Activated CD4-positive, alpha-beta memory T cell treated with anti-CD3 and anti-CD28 coated beads for 36 hours (primary cell): ENCODE measurements at regions of chr17 and their contacts with region 1.

Region 1: GRCh38 chr17:29369831-29370735 is 20.1 kb upstream of the TAOK1 start:
- DNase-seq: peak; percentile 63
- H3K4me3 Mint-ChIP-seq: no peak overlapping the region
- H3K27ac Mint-ChIP-seq: no peak overlapping the region
- H3K4me1 Mint-ChIP-seq: no peaks in the 10 kb centered on the region
- H3K27me3 Mint-ChIP-seq: no peaks in the 10 kb centered on the region

Region 2: GRCh38 chr17:29384900-29385299 is 14.8 kb after region 1 on chr17:
- CTCF ChIA-PET with region 1: interaction called, 43 read pairs
- POLR2A ChIA-PET with region 1: no interaction called
- intact Hi-C with region 1: no loop called
- DNase-seq: no peak
- H3K4me3 Mint-ChIP-seq: no peak overlapping the region
- H3K27ac Mint-ChIP-seq: no peak overlapping the region
- H3K4me1 Mint-ChIP-seq: peaks cover 3% of the 10 kb centered on the region
- H3K27me3 Mint-ChIP-seq: no peaks in the 10 kb centered on the region

Region 3: GRCh38 chr17:29433541-29433940 is 63.5 kb after region 1 on chr17:
- CTCF ChIA-PET with region 1: interaction called, 12 read pairs
- POLR2A ChIA-PET with region 1: no interaction called
- intact Hi-C with region 1: no loop called
- DNase-seq: no peak
- H3K4me3 Mint-ChIP-seq: no peak overlapping the region
- H3K27ac Mint-ChIP-seq: no peak overlapping the region
- H3K4me1 Mint-ChIP-seq: peaks cover 10% of the 10 kb centered on the region
- H3K27me3 Mint-ChIP-seq: no peaks in the 10 kb centered on the region

Region 4: DNA sequence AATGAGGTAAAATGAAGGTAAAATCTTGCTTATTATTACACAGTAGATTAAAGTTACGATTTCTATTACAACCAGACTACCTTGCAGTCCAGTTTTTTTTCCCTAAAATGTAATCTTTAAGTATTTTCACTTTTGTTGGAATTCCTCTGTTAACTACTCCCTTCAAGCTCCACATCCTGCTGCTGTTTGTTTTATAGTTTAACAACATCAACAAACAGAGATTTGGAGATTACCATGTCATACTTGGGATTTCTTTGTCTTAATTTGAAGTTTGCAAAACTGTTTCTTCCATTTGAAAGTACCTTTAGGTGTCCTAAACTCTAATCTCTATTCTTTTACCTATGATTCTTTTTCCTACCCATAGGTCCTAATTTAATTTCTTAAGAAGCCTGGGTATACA is 113.4 kb after region 1 on chr17:
- CTCF ChIA-PET with region 1: interaction called, 11 read pairs
- POLR2A ChIA-PET with region 1: no interaction called
- intact Hi-C with region 1: no loop called
- DNase-seq: no peak
- H3K4me3 Mint-ChIP-seq: no peak overlapping the region
- H3K27ac Mint-ChIP-seq: no peak overlapping the region
- H3K4me1 Mint-ChIP-seq: no peaks in the 10 kb centered on the region
- H3K27me3 Mint-ChIP-seq: no peaks in the 10 kb centered on the region

Region 5: GRCh38 chr17:29504711-29505110 is 134.6 kb after region 1 on chr17:
- CTCF ChIA-PET with region 1: interaction called, 12 read pairs
- POLR2A ChIA-PET with region 1: interaction called, 3 read pairs
- intact Hi-C with region 1: no loop called
- DNase-seq: no peak
- H3K4me3 Mint-ChIP-seq: no peak overlapping the region
- H3K27ac Mint-ChIP-seq: no peak overlapping the region
- H3K4me1 Mint-ChIP-seq: no peaks in the 10 kb centered on the region
- H3K27me3 Mint-ChIP-seq: no peaks in the 10 kb centered on the region

Region 6: DNA sequence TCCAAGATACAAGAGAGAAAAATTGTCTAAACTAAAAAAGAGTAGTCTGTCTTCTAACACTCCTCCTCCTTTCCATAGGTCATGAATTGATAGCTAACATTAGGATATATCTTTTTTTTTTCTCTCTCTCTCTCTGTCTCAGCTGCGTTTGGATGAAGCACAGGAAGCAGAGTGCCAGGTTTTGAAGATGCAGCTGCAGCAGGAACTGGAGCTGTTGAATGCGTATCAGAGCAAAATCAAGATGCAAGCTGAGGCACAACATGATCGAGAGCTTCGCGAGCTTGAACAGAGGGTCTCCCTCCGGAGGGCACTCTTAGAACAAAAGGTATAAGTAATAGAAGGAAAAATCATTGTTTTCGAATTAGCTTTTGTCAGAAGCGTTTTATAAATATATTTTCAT is 163.9 kb after region 1 on chr17:
- CTCF ChIA-PET with region 1: interaction called, 104 read pairs
- POLR2A ChIA-PET with region 1: no interaction called
- intact Hi-C with region 1: loop called (anchors 1 kb)
- DNase-seq: no peak
- H3K4me3 Mint-ChIP-seq: no peak overlapping the region
- H3K27ac Mint-ChIP-seq: no peak overlapping the region
- H3K4me1 Mint-ChIP-seq: no peaks in the 10 kb centered on the region
- H3K27me3 Mint-ChIP-seq: no peaks in the 10 kb centered on the region

Region 7: DNA sequence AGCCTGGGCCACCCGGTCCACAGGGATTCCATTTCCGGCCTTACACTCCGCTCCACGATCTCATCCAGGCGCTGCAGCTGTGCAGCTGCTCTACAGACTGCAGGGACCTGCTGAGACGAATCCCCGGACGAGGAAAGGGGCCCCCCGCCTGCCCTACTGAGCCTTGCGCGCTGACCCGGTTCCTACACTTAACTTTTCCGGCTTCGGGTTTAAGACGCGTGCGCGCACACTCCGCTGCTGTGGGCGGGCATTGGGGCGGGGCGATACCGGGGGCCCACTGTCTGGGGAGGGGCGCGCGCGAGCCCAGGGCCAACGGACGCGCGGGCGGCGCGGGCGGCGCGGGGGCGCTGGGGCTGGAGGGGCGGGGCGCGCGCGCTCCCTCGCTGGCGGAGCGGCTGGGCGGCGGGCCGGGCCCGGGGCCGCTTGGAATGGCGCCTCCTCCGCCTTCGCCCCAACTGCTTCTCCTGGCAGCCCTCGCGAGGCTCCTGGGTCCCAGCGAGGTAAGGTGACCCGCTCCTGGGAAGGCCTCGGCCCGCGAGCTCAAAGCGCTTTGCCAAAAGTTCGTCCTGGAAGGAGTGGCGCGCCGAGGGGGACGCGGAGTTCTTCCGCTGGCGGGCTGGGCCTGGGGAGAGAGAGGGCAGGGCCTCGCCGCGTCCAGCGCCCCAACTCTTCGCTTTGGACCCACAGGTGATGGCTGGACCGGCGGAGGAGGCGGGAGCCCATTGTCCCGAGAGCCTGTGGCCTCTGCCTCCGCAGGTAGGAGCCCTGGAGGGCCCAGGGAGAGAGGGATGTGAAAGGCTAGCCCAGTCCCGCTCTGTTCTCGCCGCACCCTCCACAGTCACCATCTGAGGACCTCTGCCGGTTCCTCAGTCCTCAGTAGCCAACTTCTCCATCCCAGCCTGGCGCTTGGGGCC is 198.5 kb after region 1 on chr17 and contains the start of gene TP53I13:
- CTCF ChIA-PET with region 1: interaction called, 25 read pairs
- POLR2A ChIA-PET with region 1: no interaction called
- intact Hi-C with region 1: loop called (anchors 10 kb)
- DNase-seq: peak; percentile 93
- H3K4me3 Mint-ChIP-seq: peak within 1 kb of the TSS; percentile 86
- H3K27ac Mint-ChIP-seq: peak within 1 kb of the TSS; percentile 94
- H3K4me1 Mint-ChIP-seq: peaks cover 38% of the 10 kb centered on the region
- H3K27me3 Mint-ChIP-seq: no peaks in the 10 kb centered on the region
- total RNA-seq, gene TP53I13: 54.2 to 55.3 TPM